Panc1 (cell line): ENCODE measurements at regions of chr1 and their contacts with region 1.

Region 1: GRCh38 chr1:80417631-80418030 is 1383.1 kb upstream of the ADGRL2 start:
- DNase-seq: no peak
- ATAC-seq: no peak
- H3K4me3 ChIP-seq: no peak overlapping the region
- H3K27ac ChIP-seq: no peak overlapping the region
- H3K4me1 ChIP-seq: no peaks in the 10 kb centered on the region
- H3K27me3 ChIP-seq: no peaks in the 10 kb centered on the region
- CTCF ChIP-seq: no peak

Region 2: GRCh38 chr1:78688701-78689100 is 1728.9 kb before region 1 on chr1:
- CTCF ChIA-PET with region 1: no interaction called
- POLR2A ChIA-PET with region 1: interaction called, 11 read pairs
- in situ Hi-C with region 1: no loop called
- intact Hi-C with region 1: no loop called
- DNase-seq: peak; percentile 43
- ATAC-seq: no peak
- H3K4me3 ChIP-seq: no peak overlapping the region
- H3K27ac ChIP-seq: no peak overlapping the region
- H3K4me1 ChIP-seq: no peaks in the 10 kb centered on the region
- H3K27me3 ChIP-seq: no peaks in the 10 kb centered on the region
- CTCF ChIP-seq: no peak; the same call in 1 of the 2 replicates

Region 3: GRCh38 chr1:80054125-80054524 is 363.5 kb before region 1 on chr1:
- CTCF ChIA-PET with region 1: no interaction called
- POLR2A ChIA-PET with region 1: no interaction called
- in situ Hi-C with region 1: no loop called
- intact Hi-C with region 1: no loop called
- DNase-seq: no peak
- ATAC-seq: no peak
- H3K4me3 ChIP-seq: no peak overlapping the region
- H3K27ac ChIP-seq: no peak overlapping the region
- H3K4me1 ChIP-seq: no peaks in the 10 kb centered on the region
- H3K27me3 ChIP-seq: no peaks in the 10 kb centered on the region
- CTCF ChIP-seq: no peak